Aorta (tissue), 5 donors: ENCODE measurements at regions of chr12 and their contacts with region 1.

Region 1: GRCh38 chr12:120265473-120266179 is at the start of gene PXN:
- DNase-seq: peak; percentile 91 to 97
- ATAC-seq: peak; percentile 93
- H3K4me3 ChIP-seq: peak within 1 kb of the TSS; percentile 68 to 88
- H3K27ac ChIP-seq: peak within 1 kb of the TSS; percentile 46 to 76
- H3K4me1 ChIP-seq: peaks cover 3 to 4% of the 10 kb centered on the region in 2 donors
- H3K27me3 ChIP-seq: no peaks in the 10 kb centered on the region
- total RNA-seq, gene PXN: 111 to 138 TPM

Region 2: DNA sequence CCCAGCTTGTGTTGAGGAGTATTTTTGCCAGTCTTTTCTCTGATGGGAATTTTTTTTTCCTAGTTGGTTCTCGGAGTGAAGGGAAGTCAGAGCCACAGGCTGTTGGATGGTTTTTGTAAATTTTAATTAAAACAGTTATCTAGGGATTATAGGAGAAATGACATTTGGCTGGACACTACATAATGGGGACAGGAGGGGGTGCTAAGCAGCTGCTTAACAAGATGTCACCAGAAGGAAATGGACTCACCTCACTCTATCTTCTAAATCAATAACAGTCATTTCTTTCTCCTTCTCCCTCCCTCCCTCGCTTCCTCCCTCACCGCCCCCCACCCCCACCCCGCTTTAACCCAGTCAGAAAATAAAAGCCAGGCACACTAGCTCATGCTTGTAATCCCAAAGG is 765.4 kb before region 1 on chr12:
- intact Hi-C with region 1: no loop called
- DNase-seq: no peak
- ATAC-seq: no peak
- H3K4me3 ChIP-seq: no peak overlapping the region
- H3K27ac ChIP-seq: no peak overlapping the region
- H3K4me1 ChIP-seq: no peaks in the 10 kb centered on the region
- H3K27me3 ChIP-seq: no peaks in the 10 kb centered on the region

Region 3: DNA sequence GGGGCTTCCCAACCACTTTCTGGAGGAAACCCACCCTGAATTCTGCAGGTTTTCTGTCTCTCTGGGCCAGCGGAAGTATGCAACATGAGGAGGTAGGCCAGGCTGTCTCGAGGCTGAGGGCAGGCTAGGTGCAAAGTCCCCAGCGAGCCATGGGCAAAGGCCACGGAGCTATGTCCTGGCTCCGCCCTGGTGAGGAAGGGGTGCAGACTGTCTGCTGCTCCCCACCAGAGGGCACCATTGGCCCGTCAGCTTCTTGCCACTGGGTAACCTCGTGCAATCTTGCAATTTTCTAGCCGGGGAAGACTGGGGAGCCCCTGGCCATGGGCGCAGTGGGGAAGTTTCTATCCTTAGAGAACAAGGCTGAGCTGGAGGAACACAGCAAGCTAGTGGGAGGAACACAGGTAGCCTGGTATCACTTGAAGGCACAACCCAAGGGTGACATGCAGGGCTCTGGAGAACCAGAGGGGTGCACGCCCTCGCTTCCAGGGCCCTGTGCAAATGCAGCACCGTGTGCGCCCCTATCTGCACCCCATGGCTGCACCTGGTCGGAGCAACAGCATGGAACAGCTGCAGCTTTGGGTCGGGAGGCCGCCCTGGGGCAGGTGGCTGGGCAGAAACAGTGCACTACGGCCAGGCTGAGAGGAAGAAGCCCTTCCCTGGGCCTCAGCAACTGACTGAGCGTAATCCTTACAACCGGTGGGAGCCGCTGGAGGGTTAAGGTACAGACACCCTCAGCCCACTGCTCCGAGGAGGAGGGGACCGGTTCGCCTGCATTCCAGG is 37.1 kb before region 1 on chr12:
- intact Hi-C with region 1: loop called (anchors 1 kb)
- DNase-seq: peak; percentile 93 to 95
- ATAC-seq: peak; percentile 84
- H3K4me3 ChIP-seq: no peak overlapping the region
- H3K27ac ChIP-seq: no peak overlapping the region
- H3K4me1 ChIP-seq: no peaks in the 10 kb centered on the region
- H3K27me3 ChIP-seq: no peaks in the 10 kb centered on the region

Region 4: GRCh38 chr12:120394483-120395367 is 129.1 kb after region 1 on chr12:
- intact Hi-C with region 1: no loop called
- DNase-seq: peak in 1 of 2 donors; percentile 55
- ATAC-seq: no peak
- H3K4me3 ChIP-seq: no peak overlapping the region
- H3K27ac ChIP-seq: no peak overlapping the region
- H3K4me1 ChIP-seq: no peaks in the 10 kb centered on the region
- H3K27me3 ChIP-seq: no peaks in the 10 kb centered on the region